ENCODE measurements at regions of chr4 and their contacts with region 1.

Region 1: GRCh38 chr4:139030614-139031235 is 15.1 kb downstream of the NOCT start:
- DNase-seq: peak in 1 of 2 donors; percentile 68
- ATAC-seq: peak; percentile 82
- H3K4me3 ChIP-seq: no peak overlapping the region
- H3K27ac ChIP-seq: no peak overlapping the region
- H3K4me1 ChIP-seq: no peaks in the 10 kb centered on the region
- H3K27me3 ChIP-seq: no peaks in the 10 kb centered on the region

Region 2: DNA sequence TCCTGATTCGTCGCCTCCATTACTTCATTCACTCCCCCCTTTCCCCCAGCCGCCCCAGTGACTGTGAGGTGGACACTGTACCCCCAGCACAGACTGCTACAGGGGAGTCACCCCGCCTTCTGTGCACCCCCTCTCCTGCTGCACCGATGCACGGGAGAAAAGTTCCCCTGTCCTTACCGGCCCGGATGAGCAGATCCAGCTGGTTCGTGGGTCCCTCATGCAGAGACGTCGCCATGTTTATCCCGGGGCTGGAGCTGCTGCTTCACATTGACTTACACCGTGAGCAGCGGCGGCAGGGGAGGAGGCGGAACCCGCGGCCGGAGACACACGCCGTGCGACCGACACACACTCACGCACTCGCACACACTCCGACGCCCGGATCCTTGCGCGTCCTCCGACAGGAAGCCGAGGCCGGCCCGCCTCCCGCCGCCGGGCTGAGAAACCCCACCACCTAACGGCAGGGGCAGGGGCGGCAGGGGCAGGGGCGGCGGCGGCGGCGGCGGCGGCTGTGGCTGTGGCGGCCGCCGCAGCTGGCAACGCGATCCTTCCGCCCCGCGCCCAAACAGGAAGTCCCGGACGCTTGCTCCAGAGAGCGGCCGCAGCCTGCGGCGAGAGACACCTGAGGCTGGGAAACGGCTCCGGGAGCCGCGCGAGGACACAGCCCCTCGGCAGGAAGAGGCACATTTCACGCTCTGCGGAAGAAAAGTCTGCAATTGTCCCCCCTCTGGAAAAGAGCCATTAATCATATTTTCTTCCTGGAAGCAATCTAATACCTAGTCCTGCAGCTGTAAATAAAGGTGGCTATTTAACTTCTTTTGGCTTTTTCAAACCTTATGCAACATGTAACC is 53.5 kb after region 1 on chr4:
- intact Hi-C with region 1: loop called in 1 of 2 experiments (anchors 5 kb)
- DNase-seq: peak; percentile 92 to 94
- ATAC-seq: peak; percentile 91
- H3K4me3 ChIP-seq: peak overlapping the region; percentile 74 to 95
- H3K27ac ChIP-seq: peak overlapping the region; percentile 32 to 88
- H3K4me1 ChIP-seq: no peaks in the 10 kb centered on the region
- H3K27me3 ChIP-seq: no peaks in the 10 kb centered on the region

Measured in aorta (tissue), 5 donors.